Activated CD8-positive, alpha-beta T cell treated with anti-CD3 and anti-CD28 coated beads, Interleukin-2, amount 10 ng/mL, durations not matched to agents 7 days and 5 days (primary cell): ENCODE measurements at regions of chr11 and their contacts with region 1.

Region 1: GRCh38 chr11:119728651-119729580 is at the start of gene NECTIN1:
- DNase-seq: peak; percentile 86
- ATAC-seq: peak; percentile 91
- H3K4me3 Mint-ChIP-seq: peak within 1 kb of the TSS; percentile 75
- H3K27ac Mint-ChIP-seq: no peak within 1 kb of the TSS
- H3K4me1 Mint-ChIP-seq: peaks cover 5% of the 10 kb centered on the region
- H3K27me3 Mint-ChIP-seq: peaks cover 54% of the 10 kb centered on the region
- total RNA-seq, gene NECTIN1: 0.34 to 0.39 TPM

Region 2: GRCh38 chr11:119624102-119624615 is 104.8 kb before region 1 on chr11:
- CTCF ChIA-PET with region 1: interaction called, 19 read pairs
- POLR2A ChIA-PET with region 1: no interaction called
- DNase-seq: peak; percentile 22
- ATAC-seq: no peak
- H3K4me3 Mint-ChIP-seq: no peak overlapping the region
- H3K27ac Mint-ChIP-seq: no peak overlapping the region
- H3K4me1 Mint-ChIP-seq: no peaks in the 10 kb centered on the region
- H3K27me3 Mint-ChIP-seq: peaks cover 6% of the 10 kb centered on the region

Region 3: DNA sequence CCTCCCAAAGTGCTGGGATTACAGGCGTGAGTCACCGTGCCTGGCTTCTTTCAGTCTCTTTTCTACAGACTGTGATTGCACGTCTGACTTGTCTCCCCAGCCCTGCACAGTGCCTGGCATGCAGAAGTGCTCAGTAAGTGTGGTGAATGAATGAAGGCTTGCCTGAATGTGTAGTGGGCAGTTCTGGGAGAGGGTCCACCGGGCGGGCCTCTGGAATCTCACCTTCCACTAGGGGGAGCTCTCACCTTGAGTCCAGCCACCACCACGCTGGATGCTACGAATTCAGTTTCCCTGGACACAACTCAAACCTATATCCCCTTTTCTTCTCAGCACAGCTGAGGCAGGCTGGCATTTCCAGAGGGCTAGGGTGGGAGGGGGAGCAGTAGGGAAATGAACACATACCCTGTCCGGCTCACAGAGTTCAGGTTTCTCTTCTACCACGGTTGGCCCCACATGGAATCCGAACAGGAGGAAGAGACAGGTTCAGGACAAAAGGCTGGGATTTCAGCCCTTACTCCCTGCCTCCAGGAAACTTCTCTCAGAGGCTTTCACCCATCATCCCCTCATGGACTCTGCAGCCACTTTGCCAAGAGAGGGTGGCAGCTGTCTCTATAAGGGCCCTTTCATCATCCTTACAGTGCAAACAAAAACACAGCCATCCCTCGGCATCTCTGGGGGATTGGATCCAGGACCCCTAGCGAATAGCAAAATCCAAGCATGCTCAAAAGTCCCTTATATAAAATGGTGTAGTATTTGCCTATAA is 86.8 kb before region 1 on chr11:
- CTCF ChIA-PET with region 1: interaction called, 13 read pairs
- POLR2A ChIA-PET with region 1: no interaction called
- DNase-seq: peak; percentile 28
- ATAC-seq: no peak
- H3K4me3 Mint-ChIP-seq: no peak overlapping the region
- H3K27ac Mint-ChIP-seq: no peak overlapping the region
- H3K4me1 Mint-ChIP-seq: no peaks in the 10 kb centered on the region
- H3K27me3 Mint-ChIP-seq: no peaks in the 10 kb centered on the region

Region 4: GRCh38 chr11:119673759-119674336 is 55.1 kb before region 1 on chr11:
- CTCF ChIA-PET with region 1: interaction called, 50 read pairs
- POLR2A ChIA-PET with region 1: no interaction called
- DNase-seq: peak; percentile 55
- ATAC-seq: peak; percentile 71
- H3K4me3 Mint-ChIP-seq: no peak overlapping the region
- H3K27ac Mint-ChIP-seq: no peak overlapping the region
- H3K4me1 Mint-ChIP-seq: peaks cover 13% of the 10 kb centered on the region
- H3K27me3 Mint-ChIP-seq: peaks cover 2% of the 10 kb centered on the region

Region 5: GRCh38 chr11:119694334-119694733 is 34.6 kb before region 1 on chr11:
- CTCF ChIA-PET with region 1: interaction called, 41 read pairs
- POLR2A ChIA-PET with region 1: no interaction called
- DNase-seq: no peak
- ATAC-seq: no peak
- H3K4me3 Mint-ChIP-seq: no peak overlapping the region
- H3K27ac Mint-ChIP-seq: no peak overlapping the region
- H3K4me1 Mint-ChIP-seq: peaks cover 33% of the 10 kb centered on the region
- H3K27me3 Mint-ChIP-seq: peaks cover 4% of the 10 kb centered on the region

Region 6: GRCh38 chr11:119739021-119739703 is 10.2 kb after region 1 on chr11:
- CTCF ChIA-PET with region 1: interaction called, 22 read pairs
- POLR2A ChIA-PET with region 1: interaction called, 3 read pairs
- DNase-seq: no peak
- ATAC-seq: no peak
- H3K4me3 Mint-ChIP-seq: no peak overlapping the region
- H3K27ac Mint-ChIP-seq: no peak overlapping the region
- H3K4me1 Mint-ChIP-seq: no peaks in the 10 kb centered on the region
- H3K27me3 Mint-ChIP-seq: peaks cover 52% of the 10 kb centered on the region

Region 7: DNA sequence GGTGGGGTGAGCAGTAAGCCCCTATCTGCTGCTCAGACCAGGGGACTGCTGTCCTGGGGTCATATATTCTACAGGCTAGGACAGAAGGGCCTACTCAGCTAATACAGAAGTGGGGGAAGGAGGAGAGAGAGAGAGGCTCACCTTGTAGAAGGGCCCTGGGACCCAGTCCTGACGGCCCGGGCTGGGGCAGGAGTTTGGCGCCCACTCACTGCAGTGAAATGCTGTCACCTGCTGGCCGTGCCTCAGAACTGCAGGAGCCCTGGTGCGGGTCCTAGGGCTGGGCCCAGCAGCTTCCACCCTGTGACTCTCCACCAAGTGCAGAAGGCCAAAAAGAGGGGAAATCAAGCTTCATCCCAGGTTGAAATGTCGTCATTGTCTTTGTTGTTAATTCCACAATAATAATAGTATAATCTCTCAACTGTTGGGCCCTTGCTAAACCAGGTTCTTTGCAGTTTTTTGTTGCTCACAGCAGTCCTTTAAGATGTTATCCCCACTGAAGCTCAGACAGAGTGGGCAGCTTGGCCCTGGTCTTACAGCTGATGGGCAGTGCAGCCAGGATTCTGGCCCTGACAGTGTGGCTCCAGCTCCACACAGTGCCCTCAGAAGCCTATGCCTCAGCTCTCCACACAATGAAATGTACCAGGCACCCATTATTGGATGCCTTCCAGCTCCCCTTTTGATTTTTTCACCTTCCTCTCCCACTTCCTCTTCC is 379.4 kb after region 1 on chr11:
- CTCF ChIA-PET with region 1: interaction called, 15 read pairs
- POLR2A ChIA-PET with region 1: no interaction called
- DNase-seq: peak; percentile 69
- ATAC-seq: peak; percentile 84
- H3K4me3 Mint-ChIP-seq: no peak overlapping the region
- H3K27ac Mint-ChIP-seq: no peak overlapping the region
- H3K4me1 Mint-ChIP-seq: no peaks in the 10 kb centered on the region
- H3K27me3 Mint-ChIP-seq: peaks cover 2% of the 10 kb centered on the region